ENCODE measurements at regions of chr12 and their contacts with region 1.

Region 1: DNA sequence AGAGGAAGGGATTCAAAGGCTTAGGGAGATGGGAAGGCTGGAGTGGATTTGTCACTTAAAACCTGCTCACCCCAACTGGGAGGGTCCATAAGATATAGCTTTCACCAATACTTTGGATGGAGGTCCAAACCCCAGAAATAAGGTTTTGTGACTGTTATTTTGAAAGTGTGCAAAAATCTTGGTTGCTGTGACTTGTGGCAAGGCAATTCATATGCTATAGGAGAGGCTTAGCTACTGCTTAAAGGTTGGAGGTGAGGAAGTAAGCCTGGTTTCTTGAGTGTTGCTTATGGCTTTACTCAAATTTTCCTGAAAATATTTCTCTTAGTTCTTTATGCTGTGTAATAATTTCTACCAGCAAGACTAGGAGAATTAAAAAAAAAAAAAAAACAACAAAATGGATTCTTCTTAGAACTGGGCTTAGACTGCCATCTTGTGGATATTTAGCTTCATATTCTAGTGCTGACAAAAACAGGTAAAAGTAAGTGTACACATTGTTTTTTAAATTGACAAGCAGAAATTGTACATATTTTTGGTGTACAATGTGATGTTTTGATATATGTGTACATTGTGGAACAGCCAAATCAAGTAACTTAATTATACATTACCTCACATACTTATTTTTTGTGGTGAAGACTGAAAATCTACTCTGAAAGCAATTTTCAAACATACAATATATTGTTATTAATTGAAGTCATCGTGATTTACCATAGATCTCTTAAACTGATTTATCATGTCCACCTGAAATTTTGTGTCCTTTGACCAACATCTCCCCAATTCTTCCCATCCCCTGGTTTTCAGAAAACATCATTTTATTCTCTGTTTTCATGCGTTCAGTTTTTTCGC is 23.0 kb downstream of the PDE6H start:
- DNase-seq: peak; percentile 55
- H3K4me3 ChIP-seq: no peak overlapping the region
- H3K27ac ChIP-seq: no peak overlapping the region
- H3K27me3 ChIP-seq: no peaks in the 10 kb centered on the region
- CTCF ChIP-seq: peak; percentile 67

Region 2: DNA sequence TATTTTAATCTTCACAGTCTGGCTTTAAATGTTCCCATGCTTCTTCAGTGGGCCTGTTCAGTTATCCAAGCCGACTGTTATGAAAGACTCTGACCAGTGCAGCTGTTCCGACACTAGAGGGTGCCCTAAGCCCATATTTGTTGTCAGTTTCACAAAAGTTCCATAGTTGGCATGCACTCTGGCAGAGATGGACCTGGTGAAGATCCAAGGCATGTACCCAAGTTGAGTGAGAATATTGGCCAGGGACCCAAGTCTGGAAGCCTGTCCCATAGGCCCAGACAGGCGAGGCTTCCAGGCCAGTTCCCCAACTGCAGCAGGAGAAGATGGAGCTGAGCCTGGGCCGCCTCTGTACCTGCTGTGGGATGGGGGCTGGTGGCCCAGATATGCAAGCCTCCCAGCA is 272.0 kb before region 1 on chr12:
- CTCF ChIA-PET with region 1: interaction called, 14 read pairs
- POLR2A ChIA-PET with region 1: no interaction called
- DNase-seq: peak; percentile 11
- H3K4me3 ChIP-seq: no peak overlapping the region
- H3K27ac ChIP-seq: no peak overlapping the region
- H3K27me3 ChIP-seq: no peaks in the 10 kb centered on the region
- CTCF ChIP-seq: peak; percentile 75

Region 3: DNA sequence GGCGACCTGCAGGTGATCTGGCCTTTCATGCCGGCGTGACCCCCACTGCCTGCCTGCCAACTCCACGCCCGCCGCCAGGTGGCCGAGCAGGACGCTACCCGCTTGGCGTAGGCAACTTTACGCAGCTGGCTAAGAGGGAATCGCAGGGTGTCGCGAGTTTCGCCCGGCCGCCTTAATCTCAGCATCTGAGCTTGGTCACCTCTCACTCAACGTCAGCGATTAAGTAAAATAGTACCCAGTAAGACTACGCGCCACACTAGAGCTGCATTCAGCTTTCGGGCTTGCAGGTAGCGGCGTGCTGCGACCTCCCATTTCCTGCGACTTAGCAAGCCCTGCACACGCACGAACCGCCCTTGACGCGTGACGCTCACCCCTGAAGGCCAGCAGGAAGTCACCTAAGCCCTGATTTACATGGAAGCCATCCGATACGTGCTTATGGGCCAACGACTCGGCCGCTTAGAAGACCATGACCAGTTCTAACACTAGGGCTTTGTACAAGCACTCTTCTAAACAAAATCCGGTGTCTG is 225.8 kb before region 1 on chr12:
- CTCF ChIA-PET with region 1: interaction called, 27 read pairs
- POLR2A ChIA-PET with region 1: interaction called, 7 read pairs
- DNase-seq: no peak
- H3K4me3 ChIP-seq: peak overlapping the region; percentile 92
- H3K27ac ChIP-seq: peak overlapping the region; percentile 91
- H3K27me3 ChIP-seq: no peaks in the 10 kb centered on the region
- CTCF ChIP-seq: peak; percentile 76

Region 4: GRCh38 chr12:14810953-14811483 is 184.8 kb before region 1 on chr12:
- CTCF ChIA-PET with region 1: interaction called, 36 read pairs
- POLR2A ChIA-PET with region 1: no interaction called
- DNase-seq: no peak
- H3K4me3 ChIP-seq: no peak overlapping the region
- H3K27ac ChIP-seq: no peak overlapping the region
- H3K27me3 ChIP-seq: no peaks in the 10 kb centered on the region
- CTCF ChIP-seq: peak; percentile 61

Region 5: DNA sequence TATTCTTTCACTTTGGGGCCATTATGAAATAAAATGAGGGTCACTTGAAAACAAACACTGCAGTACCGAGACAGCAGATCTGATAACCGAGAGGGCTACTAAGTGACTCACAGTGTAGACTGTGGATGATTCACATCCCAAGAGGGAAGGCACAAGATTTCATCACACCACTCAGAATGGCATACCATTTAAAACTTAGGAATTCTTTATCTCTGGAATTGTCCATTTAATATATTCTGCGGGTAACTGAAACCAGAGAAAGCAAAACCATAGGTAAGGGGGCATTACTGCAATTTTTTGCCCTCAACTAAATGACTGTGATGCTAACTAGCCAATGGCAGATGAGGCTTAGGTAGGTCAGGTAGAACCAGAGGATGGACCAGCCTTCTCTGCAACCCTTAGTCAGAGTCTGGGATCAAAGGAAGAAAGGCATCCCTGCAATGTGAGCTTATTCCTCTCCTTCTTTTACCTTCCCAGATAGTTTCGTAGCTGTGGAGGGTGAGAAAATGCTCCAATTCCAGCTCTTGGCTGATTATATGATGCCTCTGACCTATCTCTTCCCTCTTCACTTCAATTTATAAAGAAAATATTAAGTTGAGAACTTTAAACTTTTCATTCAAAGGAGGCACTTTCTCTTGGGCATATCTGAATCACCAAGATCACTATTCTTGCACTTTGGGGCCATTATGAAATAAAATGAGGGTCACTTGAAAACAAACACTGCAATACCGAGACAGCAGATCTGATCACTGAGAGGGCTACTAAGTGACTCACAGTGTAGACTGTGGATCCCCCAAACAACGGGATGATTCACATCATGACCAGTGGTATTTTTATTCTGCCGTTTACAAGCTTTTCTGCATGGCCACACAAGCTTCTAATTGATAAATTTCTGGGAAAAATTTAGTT is 159.2 kb before region 1 on chr12:
- CTCF ChIA-PET with region 1: interaction called, 13 read pairs
- POLR2A ChIA-PET with region 1: interaction called, 3 read pairs
- DNase-seq: peak; percentile 38
- H3K4me3 ChIP-seq: peak overlapping the region; percentile 15
- H3K27ac ChIP-seq: peak overlapping the region; percentile 62
- H3K27me3 ChIP-seq: no peaks in the 10 kb centered on the region
- CTCF ChIP-seq: no peak

Region 6: DNA sequence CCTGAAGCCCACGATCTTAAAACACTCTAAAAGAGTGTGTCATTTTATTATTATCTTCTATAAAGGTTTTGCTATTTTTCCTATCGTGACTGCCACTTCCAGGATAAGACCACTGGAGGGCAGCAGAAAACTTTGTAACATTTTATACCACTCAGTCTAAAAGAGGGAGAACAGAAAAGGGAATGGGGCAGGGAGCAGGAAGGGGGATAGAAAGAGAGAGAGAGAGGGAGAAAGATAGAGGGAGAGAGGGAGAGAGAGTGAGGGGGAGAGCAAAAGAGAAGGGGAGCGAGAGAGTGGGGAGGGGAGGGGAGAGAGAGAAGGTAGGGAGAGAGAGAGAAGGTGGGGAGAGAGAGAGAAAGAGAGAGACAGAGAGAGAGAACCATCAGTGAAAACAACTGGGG is 150.5 kb before region 1 on chr12:
- CTCF ChIA-PET with region 1: interaction called, 191 read pairs
- POLR2A ChIA-PET with region 1: no interaction called
- DNase-seq: peak; percentile 48
- H3K4me3 ChIP-seq: no peak overlapping the region
- H3K27ac ChIP-seq: no peak overlapping the region
- H3K27me3 ChIP-seq: no peaks in the 10 kb centered on the region
- CTCF ChIP-seq: peak; percentile 79

Region 7: GRCh38 chr12:14892726-14893505 is 102.9 kb before region 1 on chr12:
- CTCF ChIA-PET with region 1: interaction called, 10 read pairs
- POLR2A ChIA-PET with region 1: no interaction called
- DNase-seq: no peak
- H3K4me3 ChIP-seq: no peak overlapping the region
- H3K27ac ChIP-seq: no peak overlapping the region
- H3K27me3 ChIP-seq: peaks cover 6% of the 10 kb centered on the region
- CTCF ChIP-seq: no peak